Common myeloid progenitor, CD34-positive (primary cell): ENCODE measurements at regions of chr1 and their contacts with region 1.

Region 1: GRCh38 chr1:44423591-44424537 is 18.8 kb downstream of the RNF220 start:
- DNase-seq: peak; percentile 82 to 89 (median 85)
- H3K4me3 ChIP-seq: peak overlapping the region in 5 of 7 experiments; percentile 27 to 69 (median 59)
- H3K27ac ChIP-seq: peak overlapping the region; percentile 59 to 75
- H3K4me1 ChIP-seq: peaks cover 36 to 99% (median 89%) of the 10 kb centered on the region in 4 experiments
- H3K27me3 ChIP-seq: no peaks in the 10 kb centered on the region

Region 2: DNA sequence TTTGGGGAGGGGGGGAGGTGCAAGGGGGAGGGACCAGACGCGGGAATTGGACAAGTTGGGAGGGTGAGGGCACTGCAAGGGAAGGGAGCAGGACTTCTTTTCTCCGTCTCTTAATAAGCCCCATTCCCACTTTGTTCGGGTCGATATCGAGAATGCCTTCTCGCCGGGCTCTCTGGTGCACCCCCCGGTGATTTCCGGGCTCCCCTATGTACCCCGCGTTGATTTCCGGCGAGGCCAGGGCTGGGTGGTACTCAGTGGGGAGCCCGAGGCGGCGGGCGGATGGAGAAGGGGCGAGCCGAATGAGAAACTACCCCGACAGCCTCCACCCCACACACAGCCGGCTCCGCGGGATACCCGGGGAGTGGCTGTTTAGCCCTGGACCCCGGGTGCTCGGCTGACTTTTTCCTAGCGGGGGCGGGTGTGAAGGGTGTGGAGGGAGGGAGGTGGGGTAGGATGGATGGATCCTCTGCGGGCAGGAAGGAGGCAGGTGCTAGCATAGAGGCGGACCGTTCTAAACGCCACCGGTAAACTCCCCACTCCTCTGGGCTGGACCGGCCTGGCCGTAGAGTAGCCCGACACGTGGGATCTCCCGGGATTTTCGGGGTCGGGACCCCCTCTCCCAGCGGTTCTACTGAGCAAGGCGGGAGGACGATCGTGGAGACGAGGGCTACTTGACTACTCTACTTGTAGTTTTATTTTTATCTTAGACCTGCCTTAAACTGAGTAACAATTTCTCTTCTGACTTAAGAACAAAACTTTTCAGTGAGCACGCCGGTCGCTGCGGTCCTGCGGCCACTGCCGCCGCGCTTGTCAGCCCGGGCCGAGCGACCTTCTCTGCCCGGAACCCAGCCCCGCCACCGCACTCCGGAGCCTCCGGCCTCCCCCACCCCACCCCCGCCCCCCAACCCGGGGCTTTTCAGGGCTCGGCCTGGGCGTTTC is 17.8 kb before region 1 on chr1:
- CTCF ChIA-PET with region 1: interaction called, 21 read pairs
- POLR2A ChIA-PET with region 1: interaction called, 9 read pairs
- DNase-seq: peak in 2 of 3 donors; percentile 74 to 79
- H3K4me3 ChIP-seq: peak overlapping the region; percentile 75 to 99 (median 93)
- H3K27ac ChIP-seq: peak overlapping the region; percentile 86 to 90
- H3K4me1 ChIP-seq: peaks cover 10 to 56% (median 29%) of the 10 kb centered on the region in 4 experiments
- H3K27me3 ChIP-seq: no peaks in the 10 kb centered on the region

Region 3: GRCh38 chr1:44411861-44412260 is 12.0 kb before region 1 on chr1:
- CTCF ChIA-PET with region 1: interaction called, 30 read pairs
- POLR2A ChIA-PET with region 1: interaction called, 8 read pairs
- DNase-seq: no peak
- H3K4me3 ChIP-seq: peak overlapping the region in 4 of 7 experiments; percentile 27 to 96 (median 62)
- H3K27ac ChIP-seq: peak overlapping the region; percentile 86 to 90
- H3K4me1 ChIP-seq: peaks cover 35 to 97% (median 80%) of the 10 kb centered on the region in 4 experiments
- H3K27me3 ChIP-seq: no peaks in the 10 kb centered on the region

Region 4: GRCh38 chr1:44437107-44437716 is 13.3 kb after region 1 on chr1:
- CTCF ChIA-PET with region 1: interaction called, 50 read pairs
- POLR2A ChIA-PET with region 1: interaction called, 5 read pairs
- DNase-seq: peak in 1 of 3 donors; percentile 21
- H3K4me3 ChIP-seq: no peak overlapping the region
- H3K27ac ChIP-seq: peak overlapping the region in 1 of 2 experiments; percentile 51
- H3K4me1 ChIP-seq: peaks cover 15 to 55% (median 46%) of the 10 kb centered on the region in 4 experiments
- H3K27me3 ChIP-seq: no peaks in the 10 kb centered on the region

Region 5: DNA sequence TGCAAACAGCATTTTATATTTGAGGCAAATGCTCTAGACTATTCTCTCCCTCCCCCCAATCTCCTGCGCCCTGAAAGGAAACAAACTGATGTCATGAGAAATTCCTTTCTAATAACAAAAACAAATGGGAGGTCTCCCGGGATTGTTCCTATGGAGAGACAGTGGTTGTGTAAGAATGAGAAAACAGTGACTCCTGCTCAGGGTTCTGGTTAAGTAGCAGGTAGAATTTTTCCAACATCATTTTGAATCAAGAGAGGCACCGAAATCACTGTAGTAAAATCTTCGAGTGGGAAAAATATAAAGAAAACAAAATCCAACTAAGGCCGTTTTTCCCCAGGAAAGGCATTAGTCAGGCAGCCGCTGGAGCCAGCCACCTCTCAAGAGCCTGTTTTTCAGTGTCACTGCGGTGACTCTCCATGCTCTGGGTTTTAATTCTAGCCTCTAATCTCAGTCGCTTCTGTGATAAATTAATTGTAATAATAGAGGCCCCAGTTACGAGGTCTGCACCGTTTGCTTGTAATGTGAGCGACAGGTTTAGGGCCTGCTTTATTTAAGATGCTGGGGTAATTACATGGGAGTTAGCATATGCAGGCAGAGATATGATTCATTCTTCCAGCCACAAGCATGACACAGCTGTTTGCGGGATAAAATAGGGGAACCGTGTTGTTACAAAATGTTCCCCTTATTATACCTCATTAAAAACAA is 61.5 kb after region 1 on chr1:
- CTCF ChIA-PET with region 1: interaction called, 19 read pairs
- POLR2A ChIA-PET with region 1: interaction called, 4 read pairs
- DNase-seq: peak; percentile 98 to 100 (median 99)
- H3K4me3 ChIP-seq: peak overlapping the region in 1 of 7 experiments; percentile 60
- H3K27ac ChIP-seq: peak overlapping the region; percentile 69 to 89
- H3K4me1 ChIP-seq: peaks cover 26 to 63% (median 53%) of the 10 kb centered on the region in 4 experiments
- H3K27me3 ChIP-seq: no peaks in the 10 kb centered on the region

Region 6: DNA sequence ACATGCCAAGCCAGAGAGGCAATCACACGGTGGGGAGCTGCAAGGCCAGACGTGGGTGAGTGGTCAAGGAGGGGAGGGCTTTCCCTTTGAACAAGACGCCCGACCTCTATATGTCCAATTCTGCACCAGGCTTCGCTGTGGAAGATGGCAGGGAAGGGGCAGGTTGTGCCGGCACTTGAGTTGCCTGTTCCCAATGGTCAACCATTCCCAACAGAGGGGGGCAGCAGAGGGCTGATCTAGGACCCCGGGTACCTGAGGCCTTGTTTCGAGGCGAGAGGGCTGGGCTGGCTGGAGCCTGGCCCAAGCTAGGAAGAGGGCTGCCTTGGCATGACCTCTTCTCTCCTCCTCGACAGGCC is 185.5 kb after region 1 on chr1:
- CTCF ChIA-PET with region 1: no interaction called
- POLR2A ChIA-PET with region 1: no interaction called
- DNase-seq: no peak
- H3K4me3 ChIP-seq: no peak overlapping the region
- H3K27ac ChIP-seq: no peak overlapping the region
- H3K4me1 ChIP-seq: no peaks in the 10 kb centered on the region
- H3K27me3 ChIP-seq: no peaks in the 10 kb centered on the region